OCI-LY7 (cell line): ENCODE measurements at regions of chr12 and their contacts with region 1.

Region 1: DNA sequence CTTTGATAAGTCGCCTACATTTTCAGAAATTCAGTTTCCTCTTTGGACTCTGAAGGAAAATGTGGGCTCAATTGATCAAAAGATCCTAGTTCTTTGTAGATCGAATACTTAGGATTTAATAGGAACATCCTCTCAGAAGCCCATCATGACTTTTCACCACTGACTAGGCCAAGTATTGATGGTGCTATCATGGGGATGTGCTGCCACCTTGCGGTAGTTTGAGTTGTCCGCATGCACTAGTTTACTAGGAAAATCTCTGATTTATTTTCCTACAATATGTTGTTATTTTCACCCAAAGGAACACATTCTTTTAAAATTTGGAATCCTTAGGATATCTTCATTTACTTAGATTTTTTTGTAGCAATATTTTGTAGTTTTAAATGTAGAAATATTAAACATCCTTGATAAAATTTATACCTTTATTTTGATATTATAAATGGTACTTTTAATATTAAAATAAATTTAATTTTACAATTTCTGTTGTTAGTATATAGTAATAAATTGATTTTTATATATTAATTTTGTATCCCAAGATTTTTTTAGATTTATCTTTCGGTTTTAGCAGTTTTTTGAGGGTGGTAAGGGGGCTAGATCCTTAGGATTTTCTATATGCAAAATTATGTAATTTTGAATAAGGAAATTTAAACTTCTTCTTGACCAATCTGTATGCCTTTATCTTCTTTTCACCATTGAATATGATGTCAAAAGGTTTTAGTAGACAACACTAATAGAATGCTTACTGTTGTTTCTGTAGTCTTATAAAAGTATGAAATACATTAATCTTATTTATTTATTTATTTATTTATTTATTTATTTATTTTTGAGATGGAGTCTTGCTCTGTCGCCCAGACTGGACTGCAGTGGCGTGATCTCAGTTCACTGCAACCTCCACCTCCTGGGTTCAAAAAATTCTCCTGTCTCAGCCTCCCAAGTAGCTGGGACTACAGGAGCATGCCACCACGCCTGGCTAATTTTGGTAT is 52.9 kb upstream of the OR9K2 start:
- DNase-seq: peak; percentile 86
- H3K4me3 ChIP-seq: no peak overlapping the region
- H3K27ac ChIP-seq: no peak overlapping the region
- H3K4me1 ChIP-seq: peaks cover 32% of the 10 kb centered on the region
- CTCF ChIP-seq: peak; percentile 98

Region 2: DNA sequence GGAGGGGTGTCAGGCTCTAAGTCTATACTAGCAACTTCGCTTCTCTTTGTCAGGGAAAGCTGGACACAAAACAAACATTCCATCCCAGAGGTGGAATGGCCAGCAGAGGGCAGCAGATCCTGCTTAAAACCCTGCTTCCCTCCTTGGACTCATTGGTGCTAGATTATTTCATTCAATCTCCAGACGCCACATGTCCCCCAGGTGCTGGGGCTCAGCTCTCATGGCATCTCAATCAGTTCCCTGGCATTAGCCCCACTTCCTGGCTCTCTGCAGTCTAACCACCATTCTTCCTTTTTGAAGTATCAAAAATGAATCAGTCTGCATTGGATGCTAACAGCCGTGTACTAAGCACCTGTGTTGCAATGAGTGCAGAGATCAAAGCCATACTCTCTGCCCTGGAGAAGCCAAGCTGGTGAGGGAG is 476.8 kb before region 1 on chr12:
- CTCF ChIA-PET with region 1: no interaction called
- POLR2A ChIA-PET with region 1: no interaction called
- intact Hi-C with region 1: loop called (anchors 10 kb)
- DNase-seq: peak; percentile 59
- H3K4me3 ChIP-seq: no peak overlapping the region
- H3K27ac ChIP-seq: no peak overlapping the region
- H3K4me1 ChIP-seq: no peaks in the 10 kb centered on the region
- CTCF ChIP-seq: peak; percentile 93

Region 3: DNA sequence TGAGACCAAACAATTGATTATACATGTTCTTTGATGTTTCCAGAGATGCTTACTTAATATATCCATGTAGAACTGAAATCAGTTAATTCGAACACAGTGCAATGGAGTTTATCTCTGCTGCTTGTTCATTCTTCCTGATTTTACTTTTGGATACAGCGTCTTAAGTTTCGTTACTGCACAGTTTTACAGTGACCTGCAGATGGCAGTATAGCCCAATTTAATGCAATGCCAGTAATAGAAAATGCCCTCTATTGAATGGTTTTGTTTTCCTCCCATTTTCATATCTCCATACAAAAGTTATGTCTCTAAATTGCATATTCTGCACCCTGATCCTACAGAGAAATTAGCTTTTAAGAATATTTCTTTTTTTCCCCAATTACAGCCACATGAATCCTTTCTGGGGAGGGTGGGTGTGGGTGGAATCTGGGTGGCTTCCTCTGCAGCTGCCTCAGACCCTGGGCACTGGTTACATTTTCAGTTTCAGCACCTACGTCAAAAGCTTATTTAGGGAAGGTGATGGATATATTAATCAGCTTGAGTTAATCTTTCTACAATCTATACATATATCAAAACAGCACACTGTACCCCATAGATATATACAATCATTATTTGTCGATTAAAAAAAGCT is 324.0 kb before region 1 on chr12:
- CTCF ChIA-PET with region 1: interaction called, 5 read pairs
- POLR2A ChIA-PET with region 1: interaction called, 3 read pairs
- intact Hi-C with region 1: loop called (anchors 2 kb)
- DNase-seq: peak; percentile 67
- H3K4me3 ChIP-seq: no peak overlapping the region
- H3K27ac ChIP-seq: no peak overlapping the region
- H3K4me1 ChIP-seq: no peaks in the 10 kb centered on the region
- CTCF ChIP-seq: peak; percentile 96

Region 4: DNA sequence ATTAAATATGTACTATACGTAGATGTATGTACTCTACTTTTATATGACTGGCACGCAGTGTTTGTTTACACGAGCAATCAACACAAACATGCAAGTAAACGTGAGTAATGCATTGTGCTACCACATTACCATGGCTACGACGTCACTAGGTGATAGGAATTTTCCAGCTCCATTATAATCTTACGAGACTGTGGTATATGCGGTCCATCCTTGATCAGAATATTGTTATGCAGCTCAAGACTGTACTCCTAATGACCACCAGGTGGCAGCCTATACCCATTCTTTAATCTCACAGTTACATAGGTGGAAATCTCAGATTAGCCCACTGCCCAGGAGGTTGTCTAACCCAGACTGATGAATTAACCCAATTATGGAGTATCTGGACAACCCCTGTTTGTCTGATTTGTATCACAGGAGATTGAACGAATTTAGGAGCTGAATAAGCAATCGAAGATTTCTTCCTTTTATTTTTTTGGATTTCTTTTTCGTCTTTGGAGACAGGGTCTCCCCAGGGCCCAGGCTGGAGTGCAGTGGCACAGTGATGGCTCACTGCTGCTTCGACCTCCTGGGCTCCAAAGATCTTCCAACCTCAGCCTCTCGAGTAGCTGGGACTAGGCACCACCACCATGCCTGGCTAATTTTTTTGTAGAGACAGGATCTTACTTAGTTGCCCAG is 80.0 kb before region 1 on chr12:
- CTCF ChIA-PET with region 1: interaction called, 72 read pairs
- POLR2A ChIA-PET with region 1: interaction called, 20 read pairs
- intact Hi-C with region 1: loop called (anchors 1 kb)
- DNase-seq: peak; percentile 83
- H3K4me3 ChIP-seq: no peak overlapping the region
- H3K27ac ChIP-seq: no peak overlapping the region
- H3K4me1 ChIP-seq: peaks cover 51% of the 10 kb centered on the region
- CTCF ChIP-seq: peak; percentile 96

Region 5: DNA sequence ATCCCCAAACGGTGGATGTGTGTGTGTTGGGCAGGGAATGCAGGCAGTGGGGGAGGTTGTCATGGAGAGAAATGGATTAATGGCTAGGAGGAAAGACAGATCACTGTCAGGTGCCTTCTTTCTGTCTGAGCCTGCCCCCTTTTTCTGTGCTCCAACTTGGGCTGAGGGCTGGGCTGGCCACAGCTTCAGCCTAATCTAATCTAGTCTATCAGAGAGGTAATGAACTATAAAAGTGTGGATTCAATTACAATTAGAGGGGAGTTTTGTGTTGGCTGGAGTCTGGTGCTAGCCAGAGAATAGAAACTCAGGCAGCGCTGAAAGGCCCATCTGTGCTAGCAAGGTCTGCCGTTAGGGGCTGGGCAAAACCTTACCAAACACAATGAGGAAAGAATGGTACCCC is 12.3 kb before region 1 on chr12:
- CTCF ChIA-PET with region 1: no interaction called
- POLR2A ChIA-PET with region 1: no interaction called
- intact Hi-C with region 1: no loop called
- DNase-seq: no peak
- H3K4me3 ChIP-seq: no peak overlapping the region
- H3K27ac ChIP-seq: no peak overlapping the region
- H3K4me1 ChIP-seq: peaks cover 9% of the 10 kb centered on the region
- CTCF ChIP-seq: no peak

Region 6: DNA sequence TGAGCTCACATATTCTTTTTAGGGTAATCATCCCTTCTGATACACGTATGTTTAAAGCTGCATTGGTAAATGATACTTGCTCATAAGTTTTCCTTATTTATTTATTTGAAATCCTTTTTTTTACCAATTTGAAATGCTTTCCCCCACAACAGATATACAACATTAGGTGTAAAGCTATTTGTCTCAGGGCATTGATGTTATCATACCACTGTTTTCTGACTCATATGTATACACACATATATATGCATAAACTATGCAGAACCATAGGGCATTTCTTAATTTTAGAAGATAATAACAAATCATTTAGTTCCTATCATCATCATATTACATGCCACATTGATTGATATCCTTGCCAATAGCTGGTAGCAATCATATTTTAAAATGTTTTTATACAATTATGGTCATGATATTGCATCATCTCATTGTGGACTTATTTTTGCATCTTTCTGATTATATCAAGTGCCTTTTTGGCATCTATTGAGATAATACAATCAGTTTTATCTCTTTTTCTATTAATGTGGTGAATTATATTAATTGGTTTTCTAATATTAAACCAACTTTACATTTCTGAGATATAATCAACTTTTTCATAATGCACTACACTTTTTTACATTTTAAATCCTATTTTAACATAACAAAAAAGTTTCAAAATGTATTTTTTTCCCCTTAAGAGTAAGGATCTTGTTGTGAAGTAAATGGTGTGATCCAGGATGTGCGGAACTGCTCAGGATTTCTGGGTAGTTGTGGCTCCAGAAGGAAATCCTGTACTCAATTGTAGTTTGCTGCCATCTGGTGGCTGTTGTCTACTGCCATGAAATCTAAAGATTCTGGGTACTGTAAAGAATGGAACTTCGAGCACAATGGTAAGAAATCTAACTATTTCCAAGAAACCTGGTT is 69.6 kb after region 1 on chr12:
- CTCF ChIA-PET with region 1: interaction called, 3 read pairs
- POLR2A ChIA-PET with region 1: no interaction called
- intact Hi-C with region 1: loop called (anchors 5 kb)
- DNase-seq: peak; percentile 76
- H3K4me3 ChIP-seq: no peak overlapping the region
- H3K27ac ChIP-seq: no peak overlapping the region
- H3K4me1 ChIP-seq: no peaks in the 10 kb centered on the region
- CTCF ChIP-seq: peak; percentile 93